H1 (cell line): ENCODE measurements at regions of chr2 and their contacts with region 1.

Region 1: DNA sequence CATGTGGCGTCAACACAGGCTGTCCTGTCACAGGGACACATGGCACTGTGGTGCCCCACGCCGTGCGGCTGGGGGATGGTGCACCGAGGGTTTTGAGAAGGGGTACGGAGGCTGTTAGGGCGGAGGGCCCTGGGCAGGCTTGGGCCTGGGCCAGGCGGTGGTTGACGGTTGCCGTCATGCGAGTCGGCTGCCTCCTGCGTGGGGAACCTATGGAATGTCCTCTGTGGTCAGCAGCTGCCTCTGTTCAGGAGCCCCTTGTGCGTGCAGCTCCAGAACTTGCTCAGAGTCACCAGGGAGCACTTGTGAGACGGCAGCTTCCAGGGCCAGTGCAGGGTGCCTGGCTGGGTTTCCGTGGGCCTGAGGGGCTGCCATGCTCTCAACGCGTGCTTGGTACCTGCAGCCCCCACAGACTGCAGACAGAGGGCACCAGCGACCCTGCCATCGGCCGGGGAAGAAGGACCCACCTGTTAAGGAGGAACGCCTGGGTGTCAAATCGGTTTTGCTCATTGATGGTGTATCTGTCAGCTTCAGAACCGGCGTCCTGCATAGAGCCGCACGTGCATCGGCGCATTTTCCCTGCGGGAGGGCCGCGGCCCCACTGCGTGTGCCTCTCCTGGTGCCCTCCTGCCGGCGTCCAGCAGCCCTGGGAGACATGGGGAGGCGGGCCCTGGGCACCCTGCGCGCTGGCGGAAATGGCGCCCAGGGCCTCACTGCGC is 10.0 kb upstream of the D2HGDH start:
- DNase-seq: peak in 1 of 2 experiments; percentile 71
- H3K4me3 ChIP-seq: no peak overlapping the region
- H3K27ac ChIP-seq: no peak overlapping the region
- H3K4me1 ChIP-seq: no peaks in the 10 kb centered on the region
- H3K27me3 ChIP-seq: no peaks in the 10 kb centered on the region; a peak in 1 of 7 replicates
- CTCF ChIP-seq: peak in 2 of 3 experiments; percentile 76 to 86; a peak in 3 of 4 replicates
- EP300 ChIP-seq: no peak
- POLR2A ChIP-seq: no peak
- RAD21 ChIP-seq: peak; percentile 72 to 78

Region 2: DNA sequence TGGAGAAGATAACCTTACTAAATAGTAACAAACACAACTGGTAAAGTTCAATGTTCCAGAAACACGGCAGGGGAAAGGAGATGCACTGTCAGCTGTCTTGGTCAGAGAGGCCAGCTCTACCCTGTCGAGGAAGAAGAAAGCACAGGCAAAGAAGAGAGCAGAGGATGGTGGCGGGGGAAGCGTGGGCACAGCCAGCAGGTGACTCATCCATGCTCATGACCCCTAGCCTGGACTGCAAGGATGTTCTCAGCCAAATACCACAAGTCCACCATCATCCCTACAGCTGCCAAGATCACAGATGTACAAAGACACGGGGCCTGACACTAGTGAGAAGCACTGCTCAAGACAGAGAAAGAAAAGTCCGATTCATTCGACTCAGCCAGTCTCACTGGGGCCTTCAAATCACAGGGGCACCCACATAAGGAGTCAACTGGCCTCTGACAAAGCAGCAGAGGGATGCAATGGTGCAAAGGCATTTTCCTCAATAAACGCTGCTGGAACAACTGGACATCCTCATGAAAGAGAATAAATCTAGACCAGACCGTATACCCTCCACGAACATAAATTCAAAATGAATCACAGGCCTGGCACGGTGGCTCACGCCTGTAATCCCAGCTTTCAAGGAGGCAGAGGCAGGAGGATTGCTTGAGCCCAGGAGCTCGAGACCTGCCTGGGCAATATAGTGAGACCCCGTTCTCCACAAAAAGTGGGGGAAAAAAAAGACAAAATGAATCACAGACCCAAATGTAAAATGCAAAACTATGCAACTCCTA is 43.4 kb before region 1 on chr2:
- CTCF ChIA-PET with region 1: no interaction called
- POLR2A ChIA-PET with region 1: no interaction called
- DNase-seq: no peak
- H3K4me3 ChIP-seq: no peak overlapping the region
- H3K27ac ChIP-seq: no peak overlapping the region
- H3K4me1 ChIP-seq: peaks cover 0 to 3% (median 0%) of the 10 kb centered on the region in 4 experiments; a peak in 1 of 7 replicates
- H3K27me3 ChIP-seq: no peaks in the 10 kb centered on the region
- CTCF ChIP-seq: no peak
- EP300 ChIP-seq: no peak
- POLR2A ChIP-seq: no peak
- RAD21 ChIP-seq: no peak

Region 3: GRCh38 chr2:241708879-241709278 is 15.5 kb before region 1 on chr2:
- CTCF ChIA-PET with region 1: interaction called, 11 read pairs
- POLR2A ChIA-PET with region 1: interaction called, 64 read pairs
- DNase-seq: no peak
- H3K4me3 ChIP-seq: no peak overlapping the region
- H3K27ac ChIP-seq: no peak overlapping the region
- H3K4me1 ChIP-seq: no peaks in the 10 kb centered on the region
- H3K27me3 ChIP-seq: no peaks in the 10 kb centered on the region
- CTCF ChIP-seq: no peak
- EP300 ChIP-seq: no peak
- POLR2A ChIP-seq: no peak
- RAD21 ChIP-seq: no peak

Region 4: GRCh38 chr2:241734467-241735208 is 10.2 kb after region 1 on chr2 and contains the start of gene D2HGDH:
- CTCF ChIA-PET with region 1: interaction called, 28 read pairs
- POLR2A ChIA-PET with region 1: interaction called, 8 read pairs
- DNase-seq: peak; percentile 50 to 98
- H3K4me3 ChIP-seq: peak within 1 kb of the TSS; percentile 71 to 94 (median 78)
- H3K27ac ChIP-seq: peak within 1 kb of the TSS; percentile 20; the same call in 1 of the 2 replicates
- H3K4me1 ChIP-seq: peaks cover 0 to 6% (median 0%) of the 10 kb centered on the region in 4 experiments; a peak in 2 of 7 replicates
- H3K27me3 ChIP-seq: peaks cover 0 to 4% (median 3%) of the 10 kb centered on the region in 4 experiments; a peak in 4 of 7 replicates
- CTCF ChIP-seq: no peak
- EP300 ChIP-seq: no peak
- POLR2A ChIP-seq: peak in 1 of 2 experiments; percentile 58; a peak in 1 of 3 replicates
- RAD21 ChIP-seq: no peak
- total RNA-seq, gene D2HGDH: 8.1 and 8.3 TPM in 2 replicates

Region 5: GRCh38 chr2:241817126-241817820 is 92.9 kb after region 1 on chr2:
- CTCF ChIA-PET with region 1: no interaction called
- POLR2A ChIA-PET with region 1: no interaction called
- DNase-seq: no peak
- H3K4me3 ChIP-seq: no peak overlapping the region
- H3K27ac ChIP-seq: no peak overlapping the region
- H3K4me1 ChIP-seq: peaks cover 0 to 8% (median 0%) of the 10 kb centered on the region in 4 experiments; a peak in 2 of 7 replicates
- H3K27me3 ChIP-seq: no peaks in the 10 kb centered on the region
- CTCF ChIP-seq: no peak
- EP300 ChIP-seq: no peak
- POLR2A ChIP-seq: no peak
- RAD21 ChIP-seq: no peak

Region 6: GRCh38 chr2:241865957-241866789 is 141.8 kb after region 1 on chr2:
- CTCF ChIA-PET with region 1: interaction called, 10 read pairs
- POLR2A ChIA-PET with region 1: no interaction called
- DNase-seq: peak in 1 of 2 experiments; percentile 75
- H3K4me3 ChIP-seq: no peak overlapping the region
- H3K27ac ChIP-seq: no peak overlapping the region
- H3K4me1 ChIP-seq: peaks cover 0 to 11% (median 3%) of the 10 kb centered on the region in 4 experiments; a peak in 5 of 7 replicates
- H3K27me3 ChIP-seq: peaks cover 0 to 16% (median 0%) of the 10 kb centered on the region in 4 experiments; a peak in 3 of 7 replicates
- CTCF ChIP-seq: no peak
- EP300 ChIP-seq: no peak
- POLR2A ChIP-seq: no peak
- RAD21 ChIP-seq: no peak